Calu3 (cell line): ENCODE measurements at regions of chr11 and their contacts with region 1.

Region 1: DNA sequence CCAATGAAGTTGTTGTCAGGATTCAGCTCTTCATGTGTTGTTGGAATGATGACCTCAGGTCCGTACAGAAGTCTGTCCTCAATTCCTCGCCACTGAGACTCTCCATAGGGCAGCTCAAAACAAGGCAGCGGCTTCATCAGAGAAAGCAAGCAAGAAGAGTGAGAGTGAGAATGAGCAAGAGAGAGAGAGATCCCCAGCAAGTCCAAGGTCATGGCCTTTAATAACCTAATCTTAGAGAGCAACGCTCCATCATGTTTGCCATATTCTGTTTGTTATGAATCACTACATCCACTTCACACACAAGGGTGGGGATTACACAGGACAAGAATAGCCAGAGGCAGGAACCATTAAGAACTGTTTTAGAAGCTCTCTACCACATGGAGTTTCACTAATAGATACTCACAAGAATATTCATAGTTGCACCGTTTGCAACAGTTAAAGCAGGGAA is 23.3 kb upstream of the MMP7 start:
- DNase-seq: no peak
- H3K4me3 Mint-ChIP-seq: no peak overlapping the region
- H3K27ac Mint-ChIP-seq: no peak overlapping the region
- H3K4me1 Mint-ChIP-seq: peaks cover 35% of the 10 kb centered on the region
- H3K27me3 Mint-ChIP-seq: no peaks in the 10 kb centered on the region
- CTCF ChIP-seq: no peak

Region 2: DNA sequence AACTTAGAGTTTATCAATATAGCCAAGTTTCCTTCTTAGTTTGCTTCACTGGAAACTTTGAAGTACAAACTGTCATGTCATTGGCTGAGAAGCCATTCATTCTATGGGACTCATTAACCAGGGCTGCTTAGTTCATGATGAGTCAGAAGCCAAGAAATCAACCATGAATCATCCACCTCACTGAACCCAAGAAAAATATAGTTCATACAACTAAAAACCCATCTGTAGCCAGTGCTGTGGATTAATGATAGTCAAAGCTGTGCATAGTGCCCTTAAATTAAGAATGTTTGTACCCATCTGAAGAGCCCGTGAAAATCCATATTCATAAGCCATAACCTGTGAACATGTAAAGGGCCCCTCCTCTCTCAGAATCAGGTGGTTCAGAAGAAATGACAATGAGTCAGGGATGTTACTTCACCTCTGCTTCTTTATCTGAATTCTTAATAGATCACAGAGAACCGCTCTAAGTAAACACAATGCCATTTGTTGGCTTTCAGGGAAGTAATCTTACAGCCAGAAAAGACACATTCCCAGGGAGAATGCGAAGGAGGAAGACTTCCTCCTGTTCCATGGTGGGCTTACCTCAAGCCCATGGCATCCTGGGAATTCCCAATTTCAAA is 45.9 kb after region 1 on chr11:
- CTCF ChIA-PET with region 1: no interaction called
- intact Hi-C with region 1: loop called (anchors 5 kb)
- DNase-seq: peak; percentile 48
- H3K4me3 Mint-ChIP-seq: no peak overlapping the region
- H3K27ac Mint-ChIP-seq: peak overlapping the region; percentile 70
- H3K4me1 Mint-ChIP-seq: peaks cover 46% of the 10 kb centered on the region
- H3K27me3 Mint-ChIP-seq: no peaks in the 10 kb centered on the region
- CTCF ChIP-seq: no peak